Breast epithelium (tissue), 4 donors: ENCODE measurements at regions of chr4 and their contacts with region 1.

Region 1: DNA sequence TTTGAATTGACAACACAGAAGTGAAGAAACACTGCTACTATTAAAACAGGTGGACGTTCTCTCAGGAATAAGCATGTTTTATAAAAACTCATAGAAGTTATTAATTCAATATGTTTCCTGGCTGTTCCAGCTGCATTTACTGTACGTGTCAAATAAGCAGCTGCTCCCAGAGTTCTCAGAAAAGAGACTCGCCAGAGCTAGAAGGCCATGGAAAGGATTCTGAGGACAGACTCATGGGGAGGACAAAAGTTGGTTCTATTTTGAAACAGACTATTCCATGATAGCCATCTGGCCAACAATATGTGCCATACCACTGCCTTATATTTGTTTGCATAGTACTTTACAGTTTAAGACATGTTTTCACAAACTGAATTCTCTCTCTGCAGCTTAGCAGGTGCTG is 136.5 kb downstream of the NR3C2 start:
- DNase-seq: no peak
- H3K4me3 ChIP-seq: no peak overlapping the region
- H3K27ac ChIP-seq: no peak overlapping the region
- H3K4me1 ChIP-seq: no peaks in the 10 kb centered on the region
- H3K27me3 ChIP-seq: no peaks in the 10 kb centered on the region
- CTCF ChIP-seq: no peak
- POLR2A ChIP-seq: no peak

Region 2: DNA sequence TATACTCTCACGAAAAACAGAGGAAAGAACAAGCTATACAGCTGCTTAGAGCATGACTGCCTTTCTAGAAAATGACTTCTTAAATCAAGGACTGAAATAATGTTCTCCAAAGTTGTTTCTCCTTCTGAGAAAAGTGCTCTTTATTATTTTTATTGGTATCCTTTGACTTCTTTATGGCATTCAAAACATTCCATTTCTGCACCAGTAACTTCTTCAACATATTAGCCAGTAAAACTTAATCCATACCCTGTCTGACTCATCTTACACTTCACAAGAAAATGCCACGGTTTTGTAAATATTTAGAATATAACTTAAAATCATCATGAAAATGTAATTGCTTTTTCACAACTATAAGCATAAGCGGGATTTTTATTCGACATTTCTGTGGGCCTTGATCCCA is 43.9 kb before region 1 on chr4:
- intact Hi-C with region 1: no loop called
- DNase-seq: no peak
- H3K4me3 ChIP-seq: no peak overlapping the region
- H3K27ac ChIP-seq: no peak overlapping the region
- H3K4me1 ChIP-seq: no peaks in the 10 kb centered on the region
- H3K27me3 ChIP-seq: no peaks in the 10 kb centered on the region
- CTCF ChIP-seq: no peak
- POLR2A ChIP-seq: no peak

Region 3: GRCh38 chr4:148327683-148328082 is 21.9 kb after region 1 on chr4:
- intact Hi-C with region 1: loop called (anchors 2 kb)
- DNase-seq: no peak
- H3K4me3 ChIP-seq: no peak overlapping the region
- H3K27ac ChIP-seq: no peak overlapping the region
- H3K4me1 ChIP-seq: no peaks in the 10 kb centered on the region
- H3K27me3 ChIP-seq: no peaks in the 10 kb centered on the region
- CTCF ChIP-seq: no peak
- POLR2A ChIP-seq: no peak